ENCODE measurements at regions of chr5 and their contacts with region 1.

Region 1: GRCh38 chr5:115098041-115098702 is 71.5 kb downstream of the TRIM36 start:
- DNase-seq: peak; percentile 63
- H3K4me3 ChIP-seq: no peak overlapping the region; a peak in 1 of 4 replicates
- H3K27ac ChIP-seq: no peak overlapping the region
- H3K4me1 ChIP-seq: no peaks in the 10 kb centered on the region; a peak in 2 of 4 replicates
- H3K27me3 ChIP-seq: no peaks in the 10 kb centered on the region; the same call in 1 of the 2 replicates
- CTCF ChIP-seq: peak; percentile 82
- EP300 ChIP-seq: no peak
- RAD21 ChIP-seq: peak; percentile 89

Region 2: GRCh38 chr5:114857941-114858551 is 240.1 kb before region 1 on chr5:
- CTCF ChIA-PET with region 1: no interaction called
- POLR2A ChIA-PET with region 1: no interaction called
- DNase-seq: no peak
- H3K4me3 ChIP-seq: no peak overlapping the region
- H3K27ac ChIP-seq: no peak overlapping the region
- H3K4me1 ChIP-seq: no peaks in the 10 kb centered on the region
- H3K27me3 ChIP-seq: no peaks in the 10 kb centered on the region
- CTCF ChIP-seq: no peak
- EP300 ChIP-seq: no peak
- RAD21 ChIP-seq: no peak

Region 3: DNA sequence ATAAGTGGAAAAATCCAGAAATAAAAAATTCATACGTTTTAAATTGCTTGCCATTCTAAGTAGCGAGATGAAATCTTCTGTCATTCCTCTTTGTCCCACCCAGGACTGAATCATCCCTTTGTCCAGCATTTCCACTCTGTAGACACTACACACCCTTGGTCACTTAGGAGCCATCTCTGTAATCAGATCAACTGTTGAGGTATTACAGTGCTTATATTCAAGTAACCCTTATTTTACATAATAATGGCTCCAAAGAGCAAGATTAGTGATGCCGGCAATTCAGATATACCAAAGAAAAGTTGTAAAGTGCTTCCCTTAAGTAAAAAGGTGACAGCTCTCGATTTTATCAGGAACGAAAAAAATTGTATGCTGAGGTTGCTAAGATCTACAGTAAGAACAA is 11.2 kb after region 1 on chr5:
- CTCF ChIA-PET with region 1: interaction called, 17 read pairs
- POLR2A ChIA-PET with region 1: no interaction called
- DNase-seq: no peak
- H3K4me3 ChIP-seq: no peak overlapping the region
- H3K27ac ChIP-seq: no peak overlapping the region
- H3K4me1 ChIP-seq: no peaks in the 10 kb centered on the region
- H3K27me3 ChIP-seq: no peaks in the 10 kb centered on the region
- CTCF ChIP-seq: no peak
- EP300 ChIP-seq: no peak
- RAD21 ChIP-seq: no peak

Region 4: DNA sequence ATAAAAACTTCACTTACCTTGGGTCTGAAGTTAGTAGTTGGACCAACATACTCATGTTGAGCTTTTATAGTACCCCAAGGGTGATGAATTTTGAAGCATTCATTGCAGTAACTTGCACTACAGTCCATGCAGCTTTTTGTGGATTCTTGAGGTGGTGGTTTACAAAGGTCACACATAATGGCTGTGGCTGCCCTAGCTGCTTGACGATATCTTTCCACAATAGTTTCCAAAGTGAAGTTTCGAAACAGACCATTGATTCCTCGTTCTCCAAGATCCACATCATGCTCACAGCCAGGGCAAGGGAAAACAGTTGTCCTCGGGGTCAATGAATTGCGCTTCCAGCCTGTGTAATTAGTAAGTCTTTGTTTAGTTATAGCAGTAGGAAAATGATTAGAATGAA is 48.9 kb after region 1 on chr5:
- CTCF ChIA-PET with region 1: interaction called, 11 read pairs
- POLR2A ChIA-PET with region 1: no interaction called
- DNase-seq: no peak
- H3K4me3 ChIP-seq: no peak overlapping the region
- H3K27ac ChIP-seq: no peak overlapping the region
- H3K4me1 ChIP-seq: no peaks in the 10 kb centered on the region
- H3K27me3 ChIP-seq: no peaks in the 10 kb centered on the region
- CTCF ChIP-seq: no peak
- EP300 ChIP-seq: no peak
- RAD21 ChIP-seq: no peak

Region 5: DNA sequence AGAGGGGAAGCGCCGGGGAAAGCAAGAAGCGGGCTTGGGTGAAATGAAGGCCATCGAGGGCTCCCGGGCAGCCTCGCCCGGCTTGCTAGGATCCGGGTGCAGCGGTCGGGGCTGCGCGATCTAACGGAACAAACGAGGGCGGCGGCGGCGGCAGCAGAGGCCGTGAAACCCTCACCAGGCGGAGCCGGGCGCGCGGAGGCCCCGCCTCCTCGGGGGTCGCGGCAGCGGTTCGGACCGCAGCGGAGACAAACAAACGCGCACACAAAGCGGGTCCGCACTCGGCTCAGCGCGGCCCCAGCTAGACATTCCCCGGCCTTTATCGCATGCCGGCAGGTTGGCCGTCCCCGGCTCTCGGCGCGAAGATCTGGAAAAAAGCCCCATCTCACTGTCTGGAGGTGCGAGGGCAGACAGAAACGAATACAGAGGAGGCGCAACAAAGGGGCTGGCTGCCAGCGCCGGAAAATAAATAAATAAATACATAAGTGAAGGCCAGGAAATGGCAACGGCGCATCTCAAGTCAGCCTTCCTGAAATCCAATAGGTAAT is 82.1 kb after region 1 on chr5:
- CTCF ChIA-PET with region 1: interaction called, 12 read pairs
- POLR2A ChIA-PET with region 1: no interaction called
- DNase-seq: peak; percentile 94
- H3K4me3 ChIP-seq: peak overlapping the region; percentile 53 to 66
- H3K27ac ChIP-seq: peak overlapping the region in 1 of 2 experiments; percentile 83; a peak in 2 of 4 replicates
- H3K4me1 ChIP-seq: peaks cover 0 to 2% of the 10 kb centered on the region in 2 experiments; a peak in 1 of 4 replicates
- H3K27me3 ChIP-seq: peaks cover 32% of the 10 kb centered on the region
- CTCF ChIP-seq: no peak
- EP300 ChIP-seq: no peak
- RAD21 ChIP-seq: no peak

Region 6: DNA sequence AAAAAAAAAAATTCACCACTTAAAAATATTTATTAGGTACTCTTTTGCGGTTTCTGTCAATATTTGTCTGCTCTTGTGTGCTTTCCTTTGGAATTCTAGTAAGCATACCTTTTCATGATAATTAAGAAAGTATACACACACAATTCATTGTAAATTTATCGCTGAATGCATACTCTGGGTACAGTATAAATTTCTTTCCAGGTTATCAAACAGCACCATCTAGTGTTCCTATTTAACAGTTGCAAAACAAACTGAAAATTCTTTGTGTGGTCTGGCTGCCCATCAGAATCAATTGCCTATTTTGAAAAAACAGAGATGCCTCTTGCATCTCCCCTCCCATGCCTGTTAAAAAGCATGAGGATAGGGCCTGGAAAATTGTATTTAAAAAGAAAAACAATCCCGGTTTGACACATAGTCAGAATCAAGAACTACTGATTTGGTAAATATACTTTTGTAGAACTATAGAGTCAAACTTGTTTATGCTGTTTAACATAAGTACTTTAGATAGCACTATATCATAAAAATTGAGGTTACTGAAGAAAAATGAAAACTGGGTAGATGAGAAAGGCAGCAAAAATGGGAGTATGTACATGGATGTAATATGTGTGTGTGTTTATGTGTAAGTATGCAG is 148.3 kb after region 1 on chr5:
- CTCF ChIA-PET with region 1: interaction called, 30 read pairs
- POLR2A ChIA-PET with region 1: no interaction called
- DNase-seq: peak; percentile 42
- H3K4me3 ChIP-seq: peak overlapping the region in 1 of 2 experiments; percentile 23; a peak in 1 of 4 replicates
- H3K27ac ChIP-seq: no peak overlapping the region; a peak in 1 of 4 replicates
- H3K4me1 ChIP-seq: peaks cover 0 to 3% of the 10 kb centered on the region in 2 experiments; a peak in 1 of 4 replicates
- H3K27me3 ChIP-seq: no peaks in the 10 kb centered on the region
- CTCF ChIP-seq: peak; percentile 87
- EP300 ChIP-seq: no peak
- RAD21 ChIP-seq: peak; percentile 89

Region 7: GRCh38 chr5:115398719-115399118 is 300.5 kb after region 1 on chr5:
- CTCF ChIA-PET with region 1: no interaction called
- POLR2A ChIA-PET with region 1: no interaction called
- DNase-seq: no peak
- H3K4me3 ChIP-seq: no peak overlapping the region
- H3K27ac ChIP-seq: peak overlapping the region in 1 of 2 experiments; percentile 61; a peak in 2 of 4 replicates
- H3K4me1 ChIP-seq: peaks cover 0 to 15% of the 10 kb centered on the region in 2 experiments; a peak in 3 of 4 replicates
- H3K27me3 ChIP-seq: no peaks in the 10 kb centered on the region
- CTCF ChIP-seq: no peak
- EP300 ChIP-seq: peak in 1 of 2 experiments; percentile 93; a peak in 2 of 4 replicates
- RAD21 ChIP-seq: no peak